Posterior cingulate gyrus (tissue), 11 donors: ENCODE measurements at regions of chr6 and their contacts with region 1.

Region 1: DNA sequence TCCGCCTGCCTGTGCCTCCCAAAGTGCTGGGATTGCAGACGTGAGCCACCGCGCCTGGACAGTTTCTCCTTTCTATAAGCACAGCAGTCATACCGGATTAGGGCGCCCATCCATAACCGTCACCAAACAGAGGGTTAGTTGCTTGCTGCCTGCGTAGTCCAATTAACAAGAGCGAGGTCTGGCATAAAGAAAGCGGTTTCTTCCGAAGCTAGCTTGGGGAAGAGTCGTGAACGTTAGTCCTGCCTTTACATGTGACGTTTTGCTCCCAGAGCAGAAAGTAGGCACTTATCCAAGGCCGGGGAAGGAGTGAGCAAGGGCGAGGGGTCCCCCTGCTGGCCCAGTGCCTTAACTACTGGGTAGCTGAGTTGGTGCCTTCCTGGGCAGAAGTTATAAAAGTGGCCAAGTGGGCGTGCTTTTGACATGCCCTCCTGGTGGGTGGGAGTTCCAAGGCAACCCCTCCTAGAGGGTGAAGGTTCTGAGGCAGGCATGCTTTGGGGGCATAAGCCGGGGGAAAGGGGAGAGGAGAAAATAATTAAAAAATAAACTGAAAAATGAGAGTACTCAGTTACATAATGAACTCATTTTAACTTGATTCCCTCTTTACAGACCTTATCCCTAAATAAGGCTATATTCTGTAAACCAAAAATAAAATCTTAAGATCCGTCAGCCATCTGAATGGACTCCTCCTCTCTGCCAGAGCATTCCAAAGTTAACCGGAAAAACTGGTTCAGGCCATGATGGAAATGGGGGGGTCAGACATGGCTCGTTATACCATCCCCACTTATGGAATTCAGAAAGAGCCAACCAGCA is 88.0 kb downstream of the FAM217A start:
- DNase-seq: peak; percentile 66 to 97 (median 86)

Region 2: DNA sequence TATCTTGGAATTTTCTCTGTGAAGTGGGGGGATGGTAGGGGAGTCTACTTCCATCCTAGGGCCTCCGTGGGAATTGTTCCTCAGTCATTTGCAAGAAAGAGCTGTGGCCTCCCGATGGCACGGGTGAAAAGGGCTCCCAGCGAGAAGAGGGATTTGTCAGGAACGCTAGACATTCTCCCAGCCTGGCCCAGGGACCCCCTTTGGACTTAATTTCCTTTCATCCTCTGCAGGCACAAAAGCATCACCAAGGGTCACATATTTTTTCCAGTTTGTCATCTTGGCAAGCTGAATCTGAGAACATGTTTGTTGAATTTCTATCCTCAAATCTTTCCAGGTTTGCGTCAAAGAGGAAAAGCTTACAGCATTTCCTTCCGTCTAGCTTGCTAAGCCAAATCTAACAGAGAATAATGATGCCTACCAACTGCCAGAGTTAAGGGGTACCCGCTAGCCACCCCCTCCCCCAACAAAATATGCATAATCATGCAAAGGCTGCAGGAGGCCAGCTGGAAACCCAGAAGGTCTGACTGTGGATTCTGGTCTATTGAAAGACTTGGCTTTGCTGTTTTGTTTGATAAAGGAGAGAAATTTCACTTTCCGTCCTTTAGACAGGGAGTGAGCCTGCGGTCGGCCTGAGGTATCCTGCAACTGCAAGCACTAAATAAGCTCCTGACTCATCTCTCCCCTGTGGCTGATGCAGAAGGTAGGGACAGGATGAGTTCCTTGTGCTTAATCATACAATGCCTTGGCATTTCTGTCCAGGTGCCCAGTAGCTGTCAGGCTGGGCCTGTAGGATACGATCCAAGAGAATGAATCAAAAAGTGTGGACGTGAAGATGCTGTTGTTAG is 709.0 kb before region 1 on chr6:
- intact Hi-C with region 1: loop called (anchors 10 kb)
- DNase-seq: peak in 4 of 10 donors; percentile 8 to 81 (median 46)

Region 3: GRCh38 chr6:4518506-4518905 is 527.6 kb after region 1 on chr6:
- intact Hi-C with region 1: no loop called
- DNase-seq: no peak